ENCODE measurements at regions of chr2 and their contacts with region 1.

Region 1: DNA sequence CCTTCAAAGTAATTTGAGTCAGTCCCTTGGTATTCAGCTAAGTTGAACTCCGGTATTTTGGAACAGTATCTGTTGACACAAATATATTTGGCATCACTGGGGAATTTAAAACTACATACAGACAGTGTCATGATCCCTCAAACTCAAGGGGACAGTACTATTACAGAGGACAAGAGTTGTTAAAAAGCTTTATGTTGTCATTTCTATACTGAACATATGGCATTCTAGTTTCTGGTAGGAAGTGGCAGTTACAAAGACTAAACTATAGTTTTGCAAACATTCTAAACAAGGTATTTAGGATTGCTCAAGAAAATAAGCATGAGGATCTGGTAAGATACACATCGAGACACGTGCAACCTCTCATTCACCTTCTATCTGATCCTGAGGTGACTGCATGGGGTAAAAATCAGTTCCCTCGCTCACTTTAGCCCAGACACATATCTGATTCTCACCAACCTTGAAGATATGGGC is 16.6 kb upstream of the CCNYL1 start:
- DNase-seq: no peak
- H3K4me3 ChIP-seq: no peak overlapping the region
- H3K27ac ChIP-seq: no peak overlapping the region
- H3K27me3 ChIP-seq: no peaks in the 10 kb centered on the region
- CTCF ChIP-seq: no peak

Region 2: GRCh38 chr2:206693399-206694137 is 1001.3 kb before region 1 on chr2:
- CTCF ChIA-PET with region 1: no interaction called
- POLR2A ChIA-PET with region 1: no interaction called
- DNase-seq: peak; percentile 27
- H3K4me3 ChIP-seq: no peak overlapping the region
- H3K27ac ChIP-seq: no peak overlapping the region
- H3K27me3 ChIP-seq: no peaks in the 10 kb centered on the region
- CTCF ChIP-seq: peak; percentile 66

Region 3: DNA sequence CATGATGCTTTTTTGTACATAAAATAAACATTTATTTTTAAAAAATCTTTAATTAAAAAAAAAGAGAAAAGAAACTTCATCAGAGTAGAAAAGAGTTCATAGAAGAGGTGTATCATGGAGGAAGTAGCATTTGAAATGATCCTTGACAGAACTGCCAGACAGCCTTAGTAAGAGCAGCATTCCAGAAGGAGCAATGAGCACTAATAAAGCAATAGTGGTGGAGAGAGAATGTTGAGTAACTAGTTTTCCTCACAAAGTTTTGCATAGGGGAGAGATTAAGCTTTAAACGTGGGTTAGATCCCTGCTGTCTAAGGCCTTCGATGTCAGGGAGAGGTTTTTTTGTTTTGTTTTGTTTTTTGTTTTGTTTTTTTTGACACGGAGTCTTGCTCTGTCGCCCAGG is 39.8 kb before region 1 on chr2:
- CTCF ChIA-PET with region 1: no interaction called
- POLR2A ChIA-PET with region 1: no interaction called
- DNase-seq: no peak
- H3K4me3 ChIP-seq: no peak overlapping the region
- H3K27ac ChIP-seq: no peak overlapping the region
- H3K27me3 ChIP-seq: no peaks in the 10 kb centered on the region
- CTCF ChIP-seq: no peak

Region 4: GRCh38 chr2:207710814-207711740 is 16.2 kb after region 1 on chr2 and contains the start of gene CCNYL1:
- CTCF ChIA-PET with region 1: interaction called, 3 read pairs
- POLR2A ChIA-PET with region 1: interaction called, 10 read pairs
- DNase-seq: peak; percentile 98
- H3K4me3 ChIP-seq: peak within 1 kb of the TSS; percentile 89
- H3K27ac ChIP-seq: peak within 1 kb of the TSS; percentile 73
- H3K27me3 ChIP-seq: no peaks in the 10 kb centered on the region
- CTCF ChIP-seq: peak; percentile 18; the same call in 1 of the 2 replicates
- polyA plus RNA-seq, gene CCNYL1: 15.7 and 20.5 TPM in 2 replicates